ENCODE measurements at regions of chr1 and their contacts with region 1.

Region 1: DNA sequence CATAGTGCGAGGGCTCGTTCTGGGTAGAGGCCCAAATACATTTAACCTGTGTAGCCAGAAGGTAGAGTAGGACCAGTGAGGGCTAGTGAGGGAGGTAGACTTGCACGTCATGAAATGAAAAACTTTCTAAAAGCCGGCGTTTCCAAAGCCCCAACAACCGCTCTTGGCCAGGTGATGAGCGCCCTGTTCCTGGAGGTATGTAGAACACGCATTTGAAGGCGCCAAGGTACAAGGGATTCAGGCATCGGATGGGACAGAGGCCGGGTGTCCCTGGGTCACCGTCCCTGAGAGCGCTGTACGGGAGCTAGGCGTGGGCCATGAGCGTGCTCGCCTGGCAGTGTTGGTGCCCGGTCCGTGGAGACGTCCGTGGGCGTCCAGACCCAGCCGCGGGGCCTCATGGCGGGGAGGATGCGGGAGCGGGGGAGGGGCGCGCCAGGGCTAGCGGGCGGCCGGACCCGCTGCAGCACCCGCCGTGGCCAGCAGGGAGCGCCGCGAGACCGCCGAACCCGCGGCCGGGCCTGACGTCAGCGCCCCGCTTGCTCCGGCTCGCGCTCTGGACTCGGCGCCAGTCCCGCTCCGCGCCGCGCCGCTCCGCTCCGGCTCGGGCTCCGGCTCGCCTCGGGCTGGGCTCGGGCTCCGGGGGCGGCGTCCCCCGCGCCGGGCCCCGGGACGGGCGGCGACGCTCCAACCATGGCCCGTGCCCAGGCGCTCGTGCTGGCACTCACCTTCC is at the start of gene PTPRU:
- DNase-seq: peak; percentile 62 to 89 (median 78)
- ATAC-seq: peak; percentile 95
- H3K4me3 ChIP-seq: peak within 1 kb of the TSS; percentile 24 to 36
- H3K4me3 Mint-ChIP-seq: peak within 1 kb of the TSS; percentile 84
- H3K27ac ChIP-seq: no peak within 1 kb of the TSS
- H3K27ac Mint-ChIP-seq: no peak within 1 kb of the TSS
- H3K4me1 ChIP-seq: peaks cover 20% of the 10 kb centered on the region
- H3K4me1 Mint-ChIP-seq: peaks cover 23% of the 10 kb centered on the region
- H3K27me3 ChIP-seq: peaks cover 16 to 17% of the 10 kb centered on the region in 2 experiments
- H3K27me3 Mint-ChIP-seq: peaks cover 43% of the 10 kb centered on the region
- CTCF ChIP-seq: peak; percentile 71
- total RNA-seq, gene PTPRU: 0.25 TPM in 1 of 2 experiments, not detected in the other

Region 2: GRCh38 chr1:28671254-28671820 is 564.8 kb before region 1 on chr1:
- CTCF ChIA-PET with region 1: no interaction called
- POLR2A ChIA-PET with region 1: no interaction called
- intact Hi-C with region 1: no loop called
- DNase-seq: no peak
- ATAC-seq: no peak
- H3K4me3 ChIP-seq: no peak overlapping the region
- H3K4me3 Mint-ChIP-seq: no peak overlapping the region
- H3K27ac ChIP-seq: no peak overlapping the region
- H3K27ac Mint-ChIP-seq: no peak overlapping the region
- H3K4me1 ChIP-seq: peaks cover 9% of the 10 kb centered on the region
- H3K4me1 Mint-ChIP-seq: peaks cover 22% of the 10 kb centered on the region
- H3K27me3 ChIP-seq: no peaks in the 10 kb centered on the region
- H3K27me3 Mint-ChIP-seq: no peaks in the 10 kb centered on the region
- CTCF ChIP-seq: no peak

Region 3: DNA sequence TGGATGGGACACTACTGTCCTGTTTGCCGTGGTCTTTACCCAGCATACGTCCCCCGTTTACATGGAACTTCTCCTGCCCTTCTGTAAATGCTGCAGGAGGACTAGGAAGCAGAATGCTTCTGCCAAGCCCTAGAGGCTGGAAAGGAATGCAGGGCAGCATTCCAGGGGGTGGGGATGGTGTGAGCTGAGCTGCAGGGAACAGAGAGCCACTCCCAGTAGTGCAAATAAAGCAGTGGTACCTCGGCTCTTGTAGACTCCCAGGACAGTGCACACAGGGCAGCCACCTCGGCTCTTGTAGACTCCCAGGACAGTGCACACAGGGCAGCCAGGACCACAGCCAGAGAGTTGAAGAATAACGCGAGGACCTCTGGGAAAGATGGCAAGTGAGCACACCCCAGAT is 35.6 kb after region 1 on chr1:
- CTCF ChIA-PET with region 1: no interaction called
- POLR2A ChIA-PET with region 1: no interaction called
- intact Hi-C with region 1: no loop called
- DNase-seq: no peak
- ATAC-seq: no peak
- H3K4me3 ChIP-seq: no peak overlapping the region
- H3K4me3 Mint-ChIP-seq: no peak overlapping the region
- H3K27ac ChIP-seq: no peak overlapping the region
- H3K27ac Mint-ChIP-seq: no peak overlapping the region
- H3K4me1 ChIP-seq: no peaks in the 10 kb centered on the region
- H3K4me1 Mint-ChIP-seq: no peaks in the 10 kb centered on the region
- H3K27me3 ChIP-seq: peaks cover 0 to 7% of the 10 kb centered on the region in 2 experiments
- H3K27me3 Mint-ChIP-seq: peaks cover 32% of the 10 kb centered on the region
- CTCF ChIP-seq: no peak

Region 4: DNA sequence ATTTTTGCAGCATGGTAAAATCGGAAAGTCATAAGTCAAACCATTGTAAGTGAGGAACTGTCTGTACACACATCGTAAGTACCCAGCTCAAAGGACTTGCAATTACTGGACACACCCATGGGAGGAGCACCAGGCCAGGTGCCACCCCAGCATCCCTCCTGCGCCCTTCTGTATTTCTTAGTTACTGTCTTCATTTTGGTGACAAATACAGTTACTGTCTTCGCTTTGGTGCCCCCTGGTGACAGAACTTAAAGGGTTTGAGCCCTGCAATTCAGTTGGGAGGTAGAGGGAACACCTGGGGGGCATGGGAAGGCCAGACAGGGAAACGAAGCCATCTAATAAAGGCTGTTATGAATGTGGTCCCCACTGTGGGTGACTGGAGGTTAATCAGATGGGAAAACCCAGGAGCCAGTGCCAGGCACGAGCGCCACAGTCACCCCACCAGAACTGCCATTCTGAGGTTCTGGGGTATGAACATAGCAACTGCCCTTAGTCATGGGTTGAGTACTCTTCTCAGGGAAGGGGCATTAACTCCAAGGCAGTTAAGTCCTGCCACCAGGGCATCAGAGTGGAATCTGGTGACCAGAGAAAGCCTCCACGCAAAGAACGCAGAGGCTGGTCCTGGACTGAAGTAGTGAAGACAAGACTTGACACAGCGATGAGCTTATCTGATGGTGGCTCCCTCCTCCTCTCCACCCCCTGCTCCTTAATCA is 613.1 kb after region 1 on chr1:
- CTCF ChIA-PET with region 1: interaction called, 7 read pairs
- POLR2A ChIA-PET with region 1: no interaction called
- intact Hi-C with region 1: loop called in 1 of 2 experiments (anchors 1 kb)
- DNase-seq: peak in 7 of 9 experiments; percentile 4 to 55 (median 41)
- ATAC-seq: no peak
- H3K4me3 ChIP-seq: no peak overlapping the region
- H3K4me3 Mint-ChIP-seq: no peak overlapping the region
- H3K27ac ChIP-seq: no peak overlapping the region
- H3K27ac Mint-ChIP-seq: no peak overlapping the region
- H3K4me1 ChIP-seq: no peaks in the 10 kb centered on the region
- H3K4me1 Mint-ChIP-seq: no peaks in the 10 kb centered on the region
- H3K27me3 ChIP-seq: no peaks in the 10 kb centered on the region
- H3K27me3 Mint-ChIP-seq: peaks cover 24% of the 10 kb centered on the region
- CTCF ChIP-seq: peak; percentile 26

Region 5: DNA sequence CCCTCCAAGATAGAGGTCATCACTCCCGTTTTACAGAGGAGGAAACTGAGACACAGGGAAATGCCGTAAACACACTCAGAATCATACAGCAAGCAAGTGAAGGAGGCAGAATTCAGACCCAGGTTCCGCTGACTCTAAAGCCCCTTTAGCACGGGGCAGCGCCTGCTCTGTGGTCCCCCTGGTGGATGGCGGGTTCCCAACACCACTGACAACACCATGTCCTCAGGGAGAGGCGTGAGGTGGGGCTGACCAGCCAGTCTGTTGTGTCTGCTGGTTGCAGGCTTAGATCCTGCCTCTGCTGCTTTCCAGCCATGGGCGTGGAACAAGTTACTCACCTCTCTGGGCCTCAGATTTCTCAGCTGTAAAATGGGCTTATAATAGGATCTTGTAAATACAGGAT is 870.0 kb after region 1 on chr1:
- CTCF ChIA-PET with region 1: no interaction called
- POLR2A ChIA-PET with region 1: no interaction called
- intact Hi-C with region 1: loop called in 1 of 2 experiments (anchors 5 kb)
- DNase-seq: peak in 2 of 9 experiments; percentile 10 to 23
- ATAC-seq: no peak
- H3K4me3 ChIP-seq: no peak overlapping the region
- H3K4me3 Mint-ChIP-seq: no peak overlapping the region
- H3K27ac ChIP-seq: no peak overlapping the region
- H3K27ac Mint-ChIP-seq: no peak overlapping the region
- H3K4me1 ChIP-seq: no peaks in the 10 kb centered on the region
- H3K4me1 Mint-ChIP-seq: no peaks in the 10 kb centered on the region
- H3K27me3 ChIP-seq: no peaks in the 10 kb centered on the region
- H3K27me3 Mint-ChIP-seq: peaks cover 35% of the 10 kb centered on the region
- CTCF ChIP-seq: peak; percentile 3

Region 6: DNA sequence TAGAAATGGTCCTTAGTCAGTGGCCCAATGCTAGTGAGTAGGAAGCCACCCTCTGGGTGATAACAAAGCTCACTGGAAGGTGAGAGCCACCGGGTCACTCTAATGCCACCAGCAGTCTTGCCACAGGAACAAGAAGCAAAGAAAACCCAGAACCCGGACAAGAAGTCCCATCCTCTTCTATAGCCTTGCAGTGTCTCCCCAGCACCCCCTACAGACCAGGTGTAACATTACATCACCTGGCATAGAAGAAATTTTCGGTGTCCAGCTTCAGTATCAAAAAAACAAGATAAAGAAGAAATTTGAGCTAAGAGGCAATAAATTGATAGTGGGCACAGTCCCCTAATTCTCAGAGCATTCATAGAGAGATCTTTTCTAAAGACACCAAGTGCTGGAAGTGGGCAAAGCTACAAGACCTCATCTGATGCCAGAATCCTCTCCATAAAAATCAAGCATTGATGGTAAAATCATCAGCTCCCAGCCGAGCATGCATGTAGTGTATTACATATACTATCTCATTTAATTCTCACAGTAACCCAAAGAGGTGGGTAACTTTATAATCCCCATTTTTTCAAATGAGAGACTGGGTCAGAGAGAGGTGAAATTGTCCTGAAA is 996.3 kb after region 1 on chr1:
- CTCF ChIA-PET with region 1: no interaction called
- POLR2A ChIA-PET with region 1: no interaction called
- intact Hi-C with region 1: loop called (anchors 5 kb)
- DNase-seq: peak in 2 of 9 experiments; percentile 35 to 37
- ATAC-seq: no peak
- H3K4me3 ChIP-seq: no peak overlapping the region
- H3K4me3 Mint-ChIP-seq: no peak overlapping the region
- H3K27ac ChIP-seq: no peak overlapping the region
- H3K27ac Mint-ChIP-seq: no peak overlapping the region
- H3K4me1 ChIP-seq: no peaks in the 10 kb centered on the region
- H3K4me1 Mint-ChIP-seq: no peaks in the 10 kb centered on the region
- H3K27me3 ChIP-seq: no peaks in the 10 kb centered on the region
- H3K27me3 Mint-ChIP-seq: peaks cover 13% of the 10 kb centered on the region
- CTCF ChIP-seq: peak; percentile 44

Region 7: DNA sequence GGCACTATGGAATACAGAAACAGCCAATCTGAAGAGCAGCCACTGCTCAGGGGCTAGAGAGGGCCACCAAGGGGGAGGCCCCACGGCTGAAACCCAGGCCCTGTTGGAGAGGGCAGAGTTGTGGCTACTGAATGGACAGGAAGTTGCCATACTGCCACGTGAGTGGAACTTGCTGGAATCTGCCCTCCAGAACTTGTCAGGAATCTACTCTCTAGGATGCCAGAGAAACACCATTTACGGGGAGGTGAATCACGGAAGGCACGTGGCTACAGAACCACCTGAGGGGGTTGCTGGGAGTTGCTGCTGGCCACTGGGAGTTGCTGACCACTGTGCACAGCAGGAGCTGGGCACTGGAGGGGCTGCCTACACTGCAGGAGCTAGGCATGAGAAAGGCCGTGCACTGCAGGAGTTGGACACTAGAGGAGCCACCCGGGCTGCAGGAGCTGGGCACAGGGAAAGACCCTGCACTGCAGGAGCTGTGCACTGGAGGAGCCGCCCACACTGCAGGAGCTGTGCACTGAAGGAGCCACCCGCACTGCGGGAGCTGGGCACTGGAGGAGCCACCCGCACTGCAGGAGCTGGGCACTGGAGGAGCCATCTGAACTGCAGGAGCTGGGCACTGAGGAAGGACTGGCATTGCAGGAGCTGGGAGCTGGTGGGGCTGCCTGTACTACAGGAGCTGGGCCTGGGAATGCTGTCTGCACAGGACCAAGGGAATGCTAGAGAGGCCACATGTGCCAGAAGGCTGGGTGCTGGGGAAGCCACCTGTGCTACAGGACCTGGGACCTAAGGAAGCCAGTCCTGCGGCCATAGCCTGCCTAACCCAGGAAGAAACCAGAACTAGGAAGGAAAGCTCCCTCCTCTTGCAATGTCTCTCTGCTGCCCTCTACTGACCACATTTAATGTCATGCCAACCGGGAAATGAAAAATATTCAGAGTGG is 1143.8 kb after region 1 on chr1:
- CTCF ChIA-PET with region 1: interaction called, 47 read pairs
- POLR2A ChIA-PET with region 1: no interaction called
- intact Hi-C with region 1: loop called in 1 of 2 experiments (anchors 1 kb)
- DNase-seq: peak in 8 of 9 experiments; percentile 5 to 75 (median 44)
- ATAC-seq: no peak
- H3K4me3 ChIP-seq: no peak overlapping the region
- H3K4me3 Mint-ChIP-seq: no peak overlapping the region
- H3K27ac ChIP-seq: no peak overlapping the region
- H3K27ac Mint-ChIP-seq: no peak overlapping the region
- H3K4me1 ChIP-seq: peaks cover 6% of the 10 kb centered on the region
- H3K4me1 Mint-ChIP-seq: peaks cover 2% of the 10 kb centered on the region
- H3K27me3 ChIP-seq: no peaks in the 10 kb centered on the region
- H3K27me3 Mint-ChIP-seq: peaks cover 33% of the 10 kb centered on the region
- CTCF ChIP-seq: peak; percentile 78

Region 8: DNA sequence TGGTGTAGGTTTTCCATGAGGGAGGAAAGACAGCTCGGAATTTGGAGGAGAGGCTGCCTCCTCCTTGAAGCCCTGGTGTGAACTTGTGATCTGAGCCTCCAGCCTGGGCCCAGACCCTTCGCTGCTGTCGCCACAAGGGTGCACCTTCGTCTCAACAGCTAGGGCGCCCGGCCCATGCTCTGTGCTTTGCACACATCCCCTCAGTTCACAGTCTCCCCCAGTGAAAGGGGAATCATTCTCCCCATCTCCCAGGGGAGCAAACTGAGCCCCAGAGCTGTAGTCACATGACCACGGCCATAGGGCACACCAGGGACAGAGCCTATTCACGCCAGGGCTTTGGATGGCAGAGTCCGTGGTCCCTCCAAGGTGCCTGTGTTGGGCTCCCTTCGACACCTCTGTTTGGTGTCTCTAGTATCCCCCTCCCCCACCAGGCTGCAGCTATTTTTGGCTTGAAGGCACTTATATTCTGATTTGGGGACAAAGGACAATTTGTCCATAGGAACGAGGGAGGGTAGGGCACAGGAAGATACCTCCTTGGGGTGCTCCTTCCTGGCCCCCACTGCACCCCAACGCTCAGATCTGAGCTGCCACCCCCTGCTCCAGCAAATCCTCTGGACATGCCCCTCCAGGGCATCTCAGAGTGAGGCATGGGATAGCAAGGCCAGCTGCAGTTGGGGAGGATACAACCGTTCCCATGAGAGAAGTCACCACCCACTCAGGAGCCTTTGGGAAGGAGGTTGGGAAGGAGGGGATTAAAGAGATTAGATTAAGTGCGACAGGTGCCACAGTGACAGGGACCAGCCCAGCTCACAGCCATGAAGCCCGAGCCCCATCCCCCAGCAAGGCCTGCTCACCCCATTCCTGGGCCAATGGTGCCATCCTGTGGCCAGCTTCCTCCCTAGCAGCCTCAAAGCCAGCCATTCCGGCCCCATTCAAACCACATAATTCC is 1471.6 kb after region 1 on chr1:
- CTCF ChIA-PET with region 1: interaction called, 3 read pairs
- POLR2A ChIA-PET with region 1: no interaction called
- intact Hi-C with region 1: loop called in 1 of 2 experiments (anchors 1 kb)
- DNase-seq: peak in 7 of 9 experiments; percentile 25 to 74 (median 60)
- ATAC-seq: peak; percentile 89
- H3K4me3 ChIP-seq: no peak overlapping the region
- H3K4me3 Mint-ChIP-seq: no peak overlapping the region
- H3K27ac ChIP-seq: no peak overlapping the region
- H3K27ac Mint-ChIP-seq: no peak overlapping the region
- H3K4me1 ChIP-seq: no peaks in the 10 kb centered on the region
- H3K4me1 Mint-ChIP-seq: peaks cover 6% of the 10 kb centered on the region
- H3K27me3 ChIP-seq: no peaks in the 10 kb centered on the region
- H3K27me3 Mint-ChIP-seq: peaks cover 14% of the 10 kb centered on the region
- CTCF ChIP-seq: peak; percentile 51

Region 9: GRCh38 chr1:30929135-30929889 is 1693.2 kb after region 1 on chr1:
- CTCF ChIA-PET with region 1: no interaction called
- POLR2A ChIA-PET with region 1: no interaction called
- intact Hi-C with region 1: loop called in 1 of 2 experiments (anchors 2 kb)
- DNase-seq: peak in 7 of 9 experiments; percentile 20 to 65 (median 51)
- ATAC-seq: peak; percentile 76
- H3K4me3 ChIP-seq: no peak overlapping the region
- H3K4me3 Mint-ChIP-seq: no peak overlapping the region
- H3K27ac ChIP-seq: peak overlapping the region in 1 of 2 experiments; percentile 55
- H3K27ac Mint-ChIP-seq: peak overlapping the region; percentile 10
- H3K4me1 ChIP-seq: peaks cover 3% of the 10 kb centered on the region
- H3K4me1 Mint-ChIP-seq: no peaks in the 10 kb centered on the region
- H3K27me3 ChIP-seq: no peaks in the 10 kb centered on the region
- H3K27me3 Mint-ChIP-seq: no peaks in the 10 kb centered on the region
- CTCF ChIP-seq: peak; percentile 76

Measured in CD8-positive, alpha-beta T cell (primary cell).